CD4-positive, alpha-beta T cell (primary cell): ENCODE measurements at regions of chr1 and their contacts with region 1.

Region 1: DNA sequence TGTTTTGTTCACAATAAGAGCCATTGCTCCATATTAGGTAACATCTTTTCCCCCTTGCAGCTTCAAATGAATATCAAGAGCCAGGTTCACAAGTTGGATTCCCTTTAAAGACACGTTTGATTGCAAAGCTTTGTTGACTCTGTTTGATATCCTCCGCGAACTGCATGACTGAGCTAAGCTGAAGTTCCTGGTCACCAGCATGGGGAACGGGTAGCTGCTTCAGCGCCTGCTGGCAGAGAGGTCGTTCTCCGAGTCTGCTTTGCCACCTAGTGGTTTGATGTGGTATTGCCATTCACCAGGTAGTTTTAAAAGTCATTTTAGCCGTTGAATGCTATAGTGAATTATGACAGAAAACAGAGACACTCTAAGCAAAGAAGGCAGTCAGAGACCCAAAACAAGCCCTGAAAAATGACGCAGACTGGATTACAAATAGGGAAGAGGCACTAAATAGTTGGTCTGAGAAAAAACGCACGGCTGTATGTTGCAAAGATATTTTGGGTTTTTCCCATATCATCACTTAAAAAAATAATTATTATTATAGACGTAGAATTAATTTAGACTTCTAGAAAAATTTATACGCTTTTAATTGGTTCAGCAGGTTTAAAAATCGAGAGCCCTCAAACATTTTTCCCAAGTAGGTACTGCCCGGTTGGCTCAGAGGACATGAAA is 193.5 kb upstream of the FMN2 start:
- DNase-seq: peak; percentile 53 to 83 (median 66)
- ATAC-seq: peak; percentile 94
- H3K4me3 ChIP-seq: no peak overlapping the region
- H3K4me3 Mint-ChIP-seq: no peak overlapping the region
- H3K27ac ChIP-seq: no peak overlapping the region
- H3K27ac Mint-ChIP-seq: no peak overlapping the region
- H3K4me1 ChIP-seq: peaks cover 4% of the 10 kb centered on the region
- H3K4me1 Mint-ChIP-seq: peaks cover 6% of the 10 kb centered on the region
- H3K27me3 ChIP-seq: peaks cover 0 to 7% of the 10 kb centered on the region in 2 experiments
- H3K27me3 Mint-ChIP-seq: peaks cover 5% of the 10 kb centered on the region
- CTCF ChIP-seq: peak; percentile 96

Region 2: DNA sequence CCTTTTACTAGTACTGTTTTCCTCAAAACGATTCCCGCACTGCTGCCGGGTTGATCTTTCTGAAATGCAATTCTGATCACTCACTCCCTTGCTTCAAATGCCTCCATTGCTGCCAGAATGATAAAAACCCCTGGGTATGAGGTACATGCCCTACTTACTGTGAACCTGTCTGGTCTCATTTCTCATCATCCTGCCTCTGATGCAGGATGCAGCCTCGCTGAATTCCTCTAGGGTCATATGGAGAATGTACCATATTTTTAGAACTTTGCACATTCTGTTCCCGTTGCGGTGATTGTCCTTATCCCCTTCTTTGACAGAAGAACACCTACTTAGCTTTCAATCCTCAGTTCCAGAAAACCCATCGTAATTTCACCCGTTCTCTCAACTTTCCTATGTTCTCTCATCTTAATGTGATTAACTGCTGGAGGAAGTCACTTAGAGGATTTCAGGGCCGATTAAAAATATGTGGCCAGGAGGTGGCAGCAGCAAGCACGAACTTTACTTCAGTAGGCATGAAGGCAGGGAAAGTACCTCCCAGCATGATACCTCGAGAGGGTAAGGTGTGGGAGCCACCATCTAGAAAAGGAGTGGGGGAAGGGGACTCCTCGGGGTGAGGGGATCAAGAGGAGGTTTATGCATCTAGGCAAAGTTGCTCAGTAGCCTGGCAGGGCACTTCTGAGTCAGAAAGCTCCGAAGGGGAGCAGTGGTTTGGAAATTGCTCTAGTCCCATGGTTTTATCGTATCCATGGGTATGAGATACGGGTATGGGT is 1646.0 kb before region 1 on chr1:
- CTCF ChIA-PET with region 1: no interaction called
- POLR2A ChIA-PET with region 1: no interaction called
- intact Hi-C with region 1: loop called in 1 of 2 experiments (anchors 5 kb)
- DNase-seq: peak in 4 of 14 experiments; percentile 4 to 14 (median 10)
- ATAC-seq: no peak
- H3K4me3 ChIP-seq: no peak overlapping the region
- H3K4me3 Mint-ChIP-seq: no peak overlapping the region
- H3K27ac ChIP-seq: no peak overlapping the region
- H3K27ac Mint-ChIP-seq: no peak overlapping the region
- H3K4me1 ChIP-seq: no peaks in the 10 kb centered on the region
- H3K4me1 Mint-ChIP-seq: no peaks in the 10 kb centered on the region
- H3K27me3 ChIP-seq: no peaks in the 10 kb centered on the region
- H3K27me3 Mint-ChIP-seq: no peaks in the 10 kb centered on the region
- CTCF ChIP-seq: no peak

Region 3: DNA sequence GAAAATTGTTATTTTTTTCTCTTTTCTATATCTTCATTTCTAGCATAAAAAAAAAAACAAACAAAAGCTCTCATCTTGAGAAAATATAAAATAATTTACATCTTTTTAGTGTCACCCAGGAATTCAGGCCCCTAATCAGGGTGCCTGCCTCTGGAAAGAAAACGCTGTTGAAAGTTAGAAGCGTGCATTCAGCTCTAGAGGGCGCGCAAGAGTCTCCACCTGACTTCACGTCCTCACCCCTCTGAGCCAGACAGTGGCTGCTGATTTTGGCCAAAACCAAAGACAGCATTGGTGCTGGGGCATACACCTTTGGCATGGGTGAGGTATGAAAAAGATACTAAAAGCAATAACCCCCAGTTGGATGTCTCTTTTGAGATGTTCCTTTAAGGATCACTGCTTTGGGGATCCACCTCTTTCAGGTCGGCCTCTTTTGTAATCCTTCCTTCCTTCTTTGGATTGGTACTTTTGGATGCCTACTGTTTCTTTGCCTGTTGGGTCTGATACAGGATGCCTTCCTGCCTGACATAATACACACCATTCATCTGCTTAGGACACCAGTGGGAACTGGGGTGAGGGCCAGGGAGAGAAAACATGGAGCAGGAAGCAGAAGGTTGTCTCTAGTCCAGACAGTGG is 589.4 kb before region 1 on chr1:
- CTCF ChIA-PET with region 1: no interaction called
- POLR2A ChIA-PET with region 1: no interaction called
- intact Hi-C with region 1: loop called (anchors 5 kb)
- DNase-seq: peak in 8 of 14 experiments; percentile 1 to 27 (median 6)
- ATAC-seq: no peak
- H3K4me3 ChIP-seq: no peak overlapping the region
- H3K4me3 Mint-ChIP-seq: no peak overlapping the region
- H3K27ac ChIP-seq: no peak overlapping the region
- H3K27ac Mint-ChIP-seq: no peak overlapping the region
- H3K4me1 ChIP-seq: no peaks in the 10 kb centered on the region
- H3K4me1 Mint-ChIP-seq: no peaks in the 10 kb centered on the region
- H3K27me3 ChIP-seq: no peaks in the 10 kb centered on the region
- H3K27me3 Mint-ChIP-seq: no peaks in the 10 kb centered on the region
- CTCF ChIP-seq: peak; percentile 46

Region 4: GRCh38 chr1:239587066-239587465 is 311.1 kb before region 1 on chr1:
- CTCF ChIA-PET with region 1: no interaction called
- POLR2A ChIA-PET with region 1: no interaction called
- intact Hi-C with region 1: loop called (anchors 1 to 5 kb)
- DNase-seq: peak in 11 of 14 experiments; percentile 1 to 69 (median 11)
- ATAC-seq: peak; percentile 97
- H3K4me3 ChIP-seq: no peak overlapping the region
- H3K4me3 Mint-ChIP-seq: no peak overlapping the region
- H3K27ac ChIP-seq: no peak overlapping the region
- H3K27ac Mint-ChIP-seq: peak overlapping the region; percentile 31
- H3K4me1 ChIP-seq: peaks cover 4% of the 10 kb centered on the region
- H3K4me1 Mint-ChIP-seq: peaks cover 19% of the 10 kb centered on the region
- H3K27me3 ChIP-seq: no peaks in the 10 kb centered on the region
- H3K27me3 Mint-ChIP-seq: no peaks in the 10 kb centered on the region
- CTCF ChIP-seq: no peak

Region 5: GRCh38 chr1:239951511-239952140 is 53.4 kb after region 1 on chr1:
- CTCF ChIA-PET with region 1: no interaction called
- POLR2A ChIA-PET with region 1: no interaction called
- intact Hi-C with region 1: no loop called
- DNase-seq: peak in 13 of 14 experiments; percentile 5 to 64 (median 18)
- ATAC-seq: peak; percentile 39
- H3K4me3 ChIP-seq: no peak overlapping the region
- H3K4me3 Mint-ChIP-seq: no peak overlapping the region
- H3K27ac ChIP-seq: no peak overlapping the region
- H3K27ac Mint-ChIP-seq: no peak overlapping the region
- H3K4me1 ChIP-seq: no peaks in the 10 kb centered on the region
- H3K4me1 Mint-ChIP-seq: no peaks in the 10 kb centered on the region
- H3K27me3 ChIP-seq: no peaks in the 10 kb centered on the region
- H3K27me3 Mint-ChIP-seq: peaks cover 5% of the 10 kb centered on the region
- CTCF ChIP-seq: peak; percentile 72